ENCODE measurements at regions of chr14 and their contacts with region 1.

Region 1: GRCh38 chr14:103715052-103716000 is at the starts of genes XRCC3 and ZFYVE21:
- DNase-seq: peak; percentile 100
- H3K4me3 ChIP-seq: peak within 1 kb of the TSS; percentile 52 to 83 (median 64)
- H3K27ac ChIP-seq: peak within 1 kb of the TSS in 1 of 3 donors; percentile 68
- H3K4me1 ChIP-seq: peaks cover 36 to 50% of the 10 kb centered on the region in 2 donors
- H3K27me3 ChIP-seq: no peaks in the 10 kb centered on the region
- CTCF ChIP-seq: no peak
- POLR2A ChIP-seq: peak; percentile 84 to 93
- total RNA-seq, gene XRCC3: 3.3 to 15.7 (median 7.9) TPM
- total RNA-seq, gene ZFYVE21: 113 to 167 (median 131) TPM

Region 2: DNA sequence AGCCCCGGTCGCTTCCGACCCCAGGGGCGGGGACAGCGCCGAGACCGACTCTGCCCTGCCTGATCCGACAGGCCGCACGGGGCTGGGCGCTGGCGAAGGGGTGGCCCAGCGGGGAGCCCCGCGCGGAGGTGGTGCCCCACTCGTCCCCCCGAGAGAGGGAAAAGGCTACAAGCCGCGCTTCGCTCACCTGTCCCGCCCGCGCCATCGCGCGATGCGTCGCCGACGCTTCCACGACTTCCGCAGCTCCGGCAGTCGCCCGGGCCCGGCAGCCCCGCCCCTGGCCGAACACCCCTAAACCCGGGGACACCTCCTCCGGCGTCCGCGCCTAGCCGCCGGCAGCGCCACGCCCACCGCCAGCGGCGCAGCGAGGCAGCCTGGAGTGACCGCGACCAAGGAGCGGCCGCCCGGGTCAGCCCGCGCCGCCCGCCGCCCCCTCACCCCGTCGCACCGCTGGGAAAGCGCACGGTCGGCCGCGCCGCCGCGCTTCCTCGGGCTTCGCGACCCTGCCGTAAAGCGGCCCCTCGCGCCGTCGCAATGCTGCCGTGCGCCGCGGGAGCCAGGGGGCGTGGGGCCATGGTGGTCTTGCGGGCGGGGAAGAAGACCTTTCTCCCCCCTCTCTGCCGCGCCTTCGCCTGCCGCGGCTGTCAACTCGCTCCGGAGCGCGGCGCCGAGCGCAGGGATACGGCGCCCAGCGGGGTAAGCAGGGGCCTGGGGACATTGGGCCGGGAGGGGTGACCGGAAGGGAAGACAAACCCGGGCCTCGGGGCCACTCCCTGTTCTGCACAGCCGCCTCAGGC is 152.7 kb before region 1 on chr14 and contains the starts of genes BAG5 and COA8:
- intact Hi-C with region 1: loop called (anchors 10 kb)
- DNase-seq: peak; percentile 87 to 89
- H3K4me3 ChIP-seq: peak within 1 kb of the TSS; percentile 90 to 98 (median 98)
- H3K27ac ChIP-seq: peak within 1 kb of the TSS; percentile 82 to 93 (median 88)
- H3K4me1 ChIP-seq: peaks cover 35 to 69% of the 10 kb centered on the region in 2 donors
- H3K27me3 ChIP-seq: no peaks in the 10 kb centered on the region
- CTCF ChIP-seq: peak in 2 of 6 experiments; percentile 9 to 22
- POLR2A ChIP-seq: peak; percentile 71 to 74
- total RNA-seq, gene BAG5: 39.4 to 77.5 (median 44.4) TPM
- total RNA-seq, gene COA8: 25.9 to 50.4 (median 33.6) TPM